CD4-positive, alpha-beta T cell (primary cell): ENCODE measurements at regions of chr9 and their contacts with region 1.

Region 1: DNA sequence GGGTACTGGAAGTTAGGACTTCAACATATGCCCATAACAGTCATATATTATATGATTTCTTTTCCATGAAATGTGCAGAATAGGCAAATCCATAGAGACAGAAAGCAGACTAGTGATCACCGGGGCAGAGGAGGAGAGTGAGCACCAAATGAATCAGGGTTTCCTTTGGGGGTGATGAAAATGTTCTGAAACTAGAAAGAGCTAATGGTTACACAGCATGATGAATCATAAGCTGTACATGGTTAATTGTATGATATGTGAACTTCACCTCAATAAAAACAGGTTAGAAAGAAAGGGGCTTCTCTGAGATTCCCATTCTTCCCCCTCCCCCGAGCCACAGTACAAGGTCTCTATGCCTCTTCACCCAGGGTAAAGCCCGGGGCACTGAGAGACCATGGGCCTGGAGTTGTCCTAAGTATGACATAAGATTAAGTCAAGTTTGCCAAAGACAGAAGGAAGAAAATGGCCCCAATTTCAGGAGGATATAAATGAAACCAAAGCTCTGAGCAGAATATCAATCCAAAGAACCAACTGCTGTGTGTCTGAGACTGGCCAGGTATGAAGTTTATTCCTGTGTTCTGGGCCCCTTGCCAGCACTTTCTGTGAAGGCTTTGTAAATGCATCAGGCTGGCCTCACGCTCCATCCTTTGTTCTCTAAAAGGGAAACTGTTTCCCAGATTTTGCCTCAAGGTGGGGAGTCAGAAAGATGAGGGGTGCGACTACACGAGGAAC is 243.8 kb downstream of the CDK5RAP2 start:
- DNase-seq: no peak
- ATAC-seq: no peak
- H3K4me3 ChIP-seq: no peak overlapping the region
- H3K4me3 Mint-ChIP-seq: no peak overlapping the region
- H3K27ac ChIP-seq: no peak overlapping the region
- H3K27ac Mint-ChIP-seq: no peak overlapping the region
- H3K4me1 ChIP-seq: no peaks in the 10 kb centered on the region
- H3K4me1 Mint-ChIP-seq: no peaks in the 10 kb centered on the region
- H3K27me3 ChIP-seq: peaks cover 0 to 5% of the 10 kb centered on the region in 2 experiments
- H3K27me3 Mint-ChIP-seq: peaks cover 5% of the 10 kb centered on the region
- CTCF ChIP-seq: no peak

Region 2: DNA sequence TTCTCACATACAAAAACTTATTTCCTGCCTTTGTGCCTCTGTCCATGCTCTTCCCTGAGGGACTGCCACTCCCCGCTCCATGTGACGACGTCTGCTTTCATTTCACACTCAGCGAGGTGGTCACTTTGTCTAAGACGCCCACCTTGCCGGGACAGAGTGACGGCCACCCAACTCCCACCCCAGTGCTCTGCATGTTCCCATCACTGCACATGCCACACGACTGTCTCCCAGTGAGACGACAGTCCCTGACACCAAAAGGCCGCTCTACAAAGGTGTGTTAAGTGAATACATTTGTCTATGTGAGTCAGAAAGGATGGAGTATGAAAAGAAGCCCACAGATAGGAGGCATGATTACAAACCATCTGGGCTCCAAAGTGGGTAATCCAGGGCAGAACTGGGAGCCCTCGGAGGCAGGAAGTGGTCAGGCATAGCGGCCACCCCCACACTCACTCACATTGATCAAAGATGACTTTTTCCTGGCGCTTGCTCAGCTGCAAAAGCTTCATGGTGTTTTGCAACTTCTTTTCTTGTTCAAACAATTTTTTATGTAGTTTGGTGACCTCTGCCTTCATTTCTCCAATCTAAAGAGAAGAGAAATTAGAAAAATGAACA is 58.0 kb after region 1 on chr9:
- CTCF ChIA-PET with region 1: no interaction called
- POLR2A ChIA-PET with region 1: no interaction called
- intact Hi-C with region 1: loop called in 1 of 2 experiments (anchors 10 kb)
- DNase-seq: peak in 5 of 14 experiments; percentile 1 to 40 (median 12)
- ATAC-seq: peak; percentile 43
- H3K4me3 ChIP-seq: no peak overlapping the region
- H3K4me3 Mint-ChIP-seq: peak overlapping the region; percentile 32
- H3K27ac ChIP-seq: peak overlapping the region in 1 of 2 donors; percentile 0
- H3K27ac Mint-ChIP-seq: peak overlapping the region; percentile 60
- H3K4me1 ChIP-seq: peaks cover 14% of the 10 kb centered on the region
- H3K4me1 Mint-ChIP-seq: peaks cover 35% of the 10 kb centered on the region
- H3K27me3 ChIP-seq: no peaks in the 10 kb centered on the region
- H3K27me3 Mint-ChIP-seq: no peaks in the 10 kb centered on the region
- CTCF ChIP-seq: no peak